ENCODE measurements at regions of chr11 and their contacts with region 1.

Region 1: DNA sequence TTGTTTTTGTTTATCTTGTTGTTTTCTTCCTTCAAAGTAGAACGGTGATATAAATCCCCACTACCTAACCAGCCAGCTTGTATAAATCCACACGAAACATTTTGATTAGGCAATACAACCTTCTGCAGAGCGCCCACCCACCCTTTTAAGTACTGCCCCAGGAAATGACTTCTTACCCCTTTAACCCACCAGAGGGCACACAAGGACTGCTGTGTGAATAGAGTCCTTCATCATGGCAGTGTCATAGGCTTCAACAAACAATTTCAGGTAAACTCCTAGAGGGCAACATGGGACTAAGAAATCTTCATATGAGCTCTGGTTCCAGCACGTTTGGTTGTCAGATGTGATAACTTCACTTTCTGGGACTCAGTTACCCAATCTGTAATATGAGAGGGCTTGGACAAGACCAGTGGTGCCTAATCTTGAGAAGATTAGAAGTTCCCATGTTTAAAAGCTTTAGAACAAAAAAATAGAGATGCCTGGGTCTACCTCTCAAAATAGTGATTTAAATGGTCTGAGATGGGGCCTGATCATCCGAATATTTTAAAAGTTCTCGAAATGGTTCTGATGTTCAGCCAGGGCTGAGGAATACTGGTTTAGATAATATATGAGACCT is 56.1 kb downstream of the PIWIL4 start:
- DNase-seq: peak; percentile 66 to 84 (median 70)
- ATAC-seq: peak; percentile 99
- H3K4me3 ChIP-seq: no peak overlapping the region
- H3K27ac ChIP-seq: no peak overlapping the region
- H3K4me1 ChIP-seq: no peaks in the 10 kb centered on the region; a peak in 1 of 5 replicates
- H3K27me3 ChIP-seq: no peaks in the 10 kb centered on the region
- CTCF ChIP-seq: peak; percentile 67 to 94 (median 93)
- EP300 ChIP-seq: no peak
- POLR2A ChIP-seq: no peak
- RAD21 ChIP-seq: peak; percentile 98 to 100

Region 2: GRCh38 chr11:94638902-94639373 is 15.7 kb after region 1 on chr11:
- CTCF ChIA-PET with region 1: no interaction called
- POLR2A ChIA-PET with region 1: no interaction called
- in situ Hi-C with region 1: no loop called
- intact Hi-C with region 1: no loop called
- DNase-seq: no peak
- ATAC-seq: peak; percentile 13; the same call in 2 of the 3 replicates
- H3K4me3 ChIP-seq: 0 out of 2 replicates have a peak overlapping the region, but pooled peaks have one; percentile 39
- H3K27ac ChIP-seq: no peak overlapping the region
- H3K4me1 ChIP-seq: peaks cover 0 to 34% of the 10 kb centered on the region in 2 experiments; a peak in 4 of 5 replicates
- H3K27me3 ChIP-seq: no peaks in the 10 kb centered on the region
- CTCF ChIP-seq: no peak
- EP300 ChIP-seq: no peak
- POLR2A ChIP-seq: no peak
- RAD21 ChIP-seq: no peak

Region 3: DNA sequence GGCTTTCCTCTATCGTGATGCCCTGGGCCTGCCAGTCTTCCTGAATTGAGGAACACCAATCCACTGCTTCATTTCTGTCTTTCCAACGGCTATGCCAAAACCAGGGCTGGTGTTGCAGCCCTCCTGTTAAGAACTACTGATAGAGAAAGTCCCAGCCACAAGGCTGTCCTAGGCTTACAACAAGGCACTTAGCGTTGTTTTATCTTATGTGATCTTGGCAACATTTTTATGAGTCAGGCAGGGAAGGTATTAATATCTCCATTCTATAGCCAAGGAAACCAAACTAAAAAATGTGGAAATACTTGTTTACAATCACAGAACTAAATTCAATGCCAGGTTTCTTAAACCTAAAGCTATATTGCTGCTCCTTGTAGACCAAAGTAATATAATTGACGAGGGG is 55.0 kb after region 1 on chr11:
- CTCF ChIA-PET with region 1: no interaction called
- POLR2A ChIA-PET with region 1: no interaction called
- in situ Hi-C with region 1: no loop called
- intact Hi-C with region 1: no loop called
- DNase-seq: peak in 1 of 4 experiments; percentile 30
- ATAC-seq: peak; percentile 14; the same call in 1 of the 3 replicates
- H3K4me3 ChIP-seq: no peak overlapping the region
- H3K27ac ChIP-seq: no peak overlapping the region
- H3K4me1 ChIP-seq: peaks cover 0 to 45% of the 10 kb centered on the region in 2 experiments; a peak in 4 of 5 replicates
- H3K27me3 ChIP-seq: no peaks in the 10 kb centered on the region
- CTCF ChIP-seq: no peak
- EP300 ChIP-seq: no peak
- POLR2A ChIP-seq: no peak
- RAD21 ChIP-seq: no peak

Region 4: GRCh38 chr11:94742652-94743051 is 119.4 kb after region 1 on chr11:
- CTCF ChIA-PET with region 1: no interaction called
- POLR2A ChIA-PET with region 1: no interaction called
- in situ Hi-C with region 1: no loop called
- intact Hi-C with region 1: loop called (anchors 1 kb)
- DNase-seq: peak in 1 of 4 experiments; percentile 44
- ATAC-seq: peak; percentile 64
- H3K4me3 ChIP-seq: no peak overlapping the region
- H3K27ac ChIP-seq: no peak overlapping the region
- H3K4me1 ChIP-seq: peaks cover 11 to 14% of the 10 kb centered on the region in 2 experiments; a peak in 4 of 5 replicates
- H3K27me3 ChIP-seq: peaks cover 0 to 20% of the 10 kb centered on the region in 2 experiments; a peak in 1 of 5 replicates
- CTCF ChIP-seq: no peak
- EP300 ChIP-seq: no peak
- POLR2A ChIP-seq: no peak
- RAD21 ChIP-seq: no peak; a peak in 1 of 4 replicates

Region 5: DNA sequence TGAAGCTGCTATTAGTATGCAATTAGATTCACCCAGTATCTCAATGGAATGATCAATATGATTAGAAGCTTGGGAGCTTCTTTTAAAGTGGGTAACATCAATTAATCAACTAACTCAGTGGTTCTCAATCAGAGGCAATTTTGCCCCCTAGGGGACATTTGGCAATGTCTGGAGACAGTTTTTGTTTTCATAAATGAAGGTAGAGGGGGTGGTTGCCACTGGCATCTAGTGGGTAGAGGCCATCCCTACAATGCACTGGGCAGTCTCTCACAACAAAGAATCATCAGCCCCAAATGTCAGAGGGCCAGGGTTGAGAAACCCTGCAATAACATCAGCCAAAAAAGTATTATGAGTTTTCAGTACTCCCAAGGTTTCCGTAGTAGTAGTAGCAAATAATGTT is 139.0 kb after region 1 on chr11:
- CTCF ChIA-PET with region 1: no interaction called
- POLR2A ChIA-PET with region 1: no interaction called
- in situ Hi-C with region 1: no loop called
- intact Hi-C with region 1: loop called (anchors 1 kb)
- DNase-seq: peak in 1 of 4 experiments; percentile 43
- ATAC-seq: peak; percentile 47; the same call in 1 of the 3 replicates
- H3K4me3 ChIP-seq: no peak overlapping the region
- H3K27ac ChIP-seq: no peak overlapping the region
- H3K4me1 ChIP-seq: peaks cover 0 to 12% of the 10 kb centered on the region in 2 experiments; a peak in 4 of 5 replicates
- H3K27me3 ChIP-seq: no peaks in the 10 kb centered on the region
- CTCF ChIP-seq: peak; percentile 40 to 69 (median 66); a peak in 5 of 6 replicates
- EP300 ChIP-seq: no peak
- POLR2A ChIP-seq: no peak
- RAD21 ChIP-seq: peak; percentile 74 to 76

Region 6: GRCh38 chr11:94767761-94768601 is 144.8 kb after region 1 on chr11 and contains the start of gene AMOTL1:
- CTCF ChIA-PET with region 1: no interaction called
- POLR2A ChIA-PET with region 1: no interaction called
- in situ Hi-C with region 1: no loop called
- intact Hi-C with region 1: loop called (anchors 1 kb)
- DNase-seq: peak; percentile 73 to 89 (median 74)
- ATAC-seq: peak; percentile 91
- H3K4me3 ChIP-seq: peak within 1 kb of the TSS; percentile 59
- H3K27ac ChIP-seq: peak within 1 kb of the TSS; percentile 87
- H3K4me1 ChIP-seq: peaks cover 20 to 25% of the 10 kb centered on the region in 2 experiments
- H3K27me3 ChIP-seq: no peaks in the 10 kb centered on the region; a peak in 1 of 5 replicates
- CTCF ChIP-seq: peak in 2 of 3 experiments; percentile 23 to 32; a peak in 3 of 6 replicates
- EP300 ChIP-seq: no peak
- POLR2A ChIP-seq: peak; percentile 70
- RAD21 ChIP-seq: peak; percentile 50 to 51
- polyA plus RNA-seq, gene AMOTL1: 4.0 to 4.7 TPM

Region 7: DNA sequence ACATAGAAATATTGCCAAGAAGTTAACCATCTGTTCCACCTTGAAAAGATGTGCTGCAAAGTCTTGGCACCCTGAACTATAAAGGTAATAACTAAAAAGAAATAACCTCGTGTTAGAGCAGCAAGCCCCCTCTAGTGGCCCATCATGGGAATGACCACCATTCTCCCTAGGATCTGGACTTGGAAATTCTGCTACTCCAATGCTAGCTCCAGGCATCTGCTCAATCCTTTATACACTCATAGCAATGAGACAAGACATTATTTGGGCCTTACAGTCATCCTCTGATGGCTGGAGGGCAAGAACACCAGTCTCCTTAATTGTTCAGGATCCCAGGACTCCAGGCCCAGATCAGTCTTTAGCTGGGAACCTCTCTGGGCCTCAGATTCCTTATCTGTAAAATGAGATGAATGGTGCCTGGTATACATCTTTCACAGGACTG is 274.1 kb after region 1 on chr11:
- CTCF ChIA-PET with region 1: interaction called, 18 read pairs
- POLR2A ChIA-PET with region 1: no interaction called
- in situ Hi-C with region 1: loop called (anchors 10 kb)
- intact Hi-C with region 1: loop called (anchors 1 kb)
- DNase-seq: peak; percentile 46 to 64 (median 58)
- ATAC-seq: peak; percentile 84
- H3K4me3 ChIP-seq: no peak overlapping the region
- H3K27ac ChIP-seq: no peak overlapping the region
- H3K4me1 ChIP-seq: no peaks in the 10 kb centered on the region
- H3K27me3 ChIP-seq: no peaks in the 10 kb centered on the region
- CTCF ChIP-seq: peak; percentile 71 to 86 (median 84)
- EP300 ChIP-seq: no peak
- POLR2A ChIP-seq: no peak
- RAD21 ChIP-seq: peak; percentile 62 to 80

Region 8: GRCh38 chr11:94973099-94973968 is 350.1 kb after region 1 on chr11 and contains the starts of genes CWC15 and KDM4D:
- CTCF ChIA-PET with region 1: interaction called, 9 read pairs
- POLR2A ChIA-PET with region 1: no interaction called
- in situ Hi-C with region 1: no loop called
- intact Hi-C with region 1: loop called (anchors 5 kb)
- DNase-seq: peak; percentile 94 to 97 (median 95)
- ATAC-seq: peak; percentile 100
- H3K4me3 ChIP-seq: peak within 1 kb of the TSS; percentile 86
- H3K27ac ChIP-seq: peak within 1 kb of the TSS; percentile 83
- H3K4me1 ChIP-seq: peaks cover 0 to 8% of the 10 kb centered on the region in 2 experiments; a peak in 2 of 5 replicates
- H3K27me3 ChIP-seq: no peaks in the 10 kb centered on the region
- CTCF ChIP-seq: no peak
- EP300 ChIP-seq: peak; percentile 27; the same call in 1 of the 2 replicates
- POLR2A ChIP-seq: peak; percentile 95
- RAD21 ChIP-seq: no peak
- polyA plus RNA-seq, gene CWC15: 128 to 168 TPM
- polyA plus RNA-seq, gene KDM4D: 0.34 to 0.39 TPM

Region 9: GRCh38 chr11:95050595-95051202 is 427.5 kb after region 1 on chr11:
- CTCF ChIA-PET with region 1: no interaction called
- POLR2A ChIA-PET with region 1: no interaction called
- in situ Hi-C with region 1: no loop called
- intact Hi-C with region 1: loop called (anchors 5 kb)
- DNase-seq: no peak
- ATAC-seq: peak; percentile 75
- H3K4me3 ChIP-seq: no peak overlapping the region
- H3K27ac ChIP-seq: no peak overlapping the region
- H3K4me1 ChIP-seq: peaks cover 4 to 6% of the 10 kb centered on the region in 2 experiments; a peak in 2 of 5 replicates
- H3K27me3 ChIP-seq: peaks cover 3 to 18% of the 10 kb centered on the region in 2 experiments; a peak in 3 of 5 replicates
- CTCF ChIP-seq: peak; percentile 20 to 23 (median 21); a peak in 3 of 6 replicates
- EP300 ChIP-seq: no peak
- POLR2A ChIP-seq: no peak
- RAD21 ChIP-seq: peak in 1 of 2 experiments; percentile 56; a peak in 2 of 4 replicates